ENCODE measurements at regions of chr20 and their contacts with region 1.

Region 1: DNA sequence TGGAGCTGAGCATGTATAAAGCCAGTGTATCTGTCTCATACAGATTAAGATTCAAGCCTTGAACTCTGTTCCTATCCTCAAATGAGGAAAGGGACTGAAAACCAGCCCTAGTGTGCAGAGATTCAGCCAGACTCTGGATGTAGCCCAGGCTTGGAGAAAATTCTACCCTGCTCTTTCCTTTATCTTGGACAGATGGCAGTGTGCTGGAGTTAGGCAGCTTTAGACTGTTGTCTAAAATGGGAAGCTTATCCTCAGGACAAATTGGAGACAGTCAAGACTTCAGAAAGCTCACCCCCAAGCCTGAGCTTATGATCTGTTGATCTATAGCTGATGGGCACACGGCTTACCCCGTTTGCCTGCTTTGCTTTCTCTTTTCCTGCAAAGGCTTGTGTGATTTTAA is 1057.6 kb downstream of the KIF16B start:
- DNase-seq: no peak
- ATAC-seq: no peak
- H3K4me3 ChIP-seq: no peak overlapping the region
- H3K4me3 Mint-ChIP-seq: no peak overlapping the region
- H3K27ac ChIP-seq: no peak overlapping the region
- H3K27ac Mint-ChIP-seq: no peak overlapping the region
- H3K4me1 ChIP-seq: no peaks in the 10 kb centered on the region
- H3K4me1 Mint-ChIP-seq: no peaks in the 10 kb centered on the region
- H3K27me3 ChIP-seq: no peaks in the 10 kb centered on the region
- H3K27me3 Mint-ChIP-seq: no peaks in the 10 kb centered on the region

Region 2: GRCh38 chr20:15555913-15556312 is 40.2 kb after region 1 on chr20:
- CTCF ChIA-PET with region 1: no interaction called
- POLR2A ChIA-PET with region 1: interaction called in 1 of 2 experiments, 13 read pairs
- DNase-seq: no peak
- ATAC-seq: no peak
- H3K4me3 ChIP-seq: no peak overlapping the region
- H3K4me3 Mint-ChIP-seq: no peak overlapping the region
- H3K27ac ChIP-seq: no peak overlapping the region
- H3K27ac Mint-ChIP-seq: no peak overlapping the region
- H3K4me1 ChIP-seq: no peaks in the 10 kb centered on the region
- H3K4me1 Mint-ChIP-seq: no peaks in the 10 kb centered on the region
- H3K27me3 ChIP-seq: no peaks in the 10 kb centered on the region
- H3K27me3 Mint-ChIP-seq: no peaks in the 10 kb centered on the region